ENCODE measurements at regions of chr3 and their contacts with region 1.

Region 1: DNA sequence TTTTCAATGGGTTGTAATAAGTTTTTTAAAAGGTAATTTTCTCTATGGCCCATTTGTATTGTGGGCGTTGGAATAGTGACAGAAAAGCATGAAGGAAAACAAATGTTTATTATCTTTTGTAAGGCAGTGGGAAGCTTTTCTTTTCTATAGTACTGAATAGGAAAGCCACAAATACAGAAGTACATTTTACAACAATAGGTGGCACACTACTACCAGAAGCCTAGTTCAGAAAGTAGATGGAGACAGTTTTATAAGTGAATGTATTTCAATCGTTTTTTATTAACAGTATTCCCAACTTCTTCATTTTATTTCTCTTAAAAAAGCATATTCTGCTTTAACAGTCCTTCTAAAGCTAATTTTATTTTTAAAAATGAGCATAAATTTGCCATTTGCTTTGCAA is 296.7 kb downstream of the PTPRG start:
- DNase-seq: no peak
- H3K4me3 Mint-ChIP-seq: no peak overlapping the region
- H3K27ac Mint-ChIP-seq: no peak overlapping the region
- H3K4me1 Mint-ChIP-seq: no peaks in the 10 kb centered on the region
- H3K27me3 Mint-ChIP-seq: peaks cover 3% of the 10 kb centered on the region

Region 2: DNA sequence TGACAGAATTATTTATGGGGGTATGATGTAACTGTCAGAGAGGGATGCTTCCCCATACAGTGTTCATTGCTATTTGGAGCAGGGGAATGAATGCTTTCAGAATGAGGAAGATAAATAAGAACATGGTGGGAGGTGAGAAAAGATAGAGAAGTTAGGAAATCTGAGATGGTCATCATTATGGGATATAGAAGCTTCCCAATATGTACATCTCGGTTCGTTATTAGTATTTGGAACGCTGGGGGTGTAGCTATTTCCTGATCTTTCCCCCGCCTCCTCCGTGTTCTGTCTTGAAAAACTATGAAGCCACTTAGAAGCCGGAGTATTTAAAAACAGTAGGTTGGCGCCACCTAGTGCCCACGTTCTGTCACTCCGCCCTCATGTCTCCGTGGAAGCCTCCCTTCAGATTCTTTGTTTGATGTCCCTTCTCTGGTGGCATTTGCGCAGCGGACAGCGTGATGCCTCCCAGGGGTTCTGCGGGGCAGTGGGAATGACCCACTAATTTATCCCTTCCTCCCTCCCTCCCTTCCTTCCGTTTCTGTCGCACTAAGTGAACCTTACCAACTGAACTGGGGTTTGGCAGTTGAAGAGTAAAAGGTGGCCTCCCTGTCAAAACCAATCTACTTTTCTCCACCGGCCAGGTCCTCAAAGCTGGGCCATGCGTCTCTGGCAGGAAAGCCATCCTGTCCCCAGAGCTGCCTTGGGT is 330.8 kb after region 1 on chr3:
- intact Hi-C with region 1: loop called (anchors 10 kb)
- DNase-seq: peak; percentile 35
- H3K4me3 Mint-ChIP-seq: peak overlapping the region; percentile 24
- H3K27ac Mint-ChIP-seq: no peak overlapping the region
- H3K4me1 Mint-ChIP-seq: peaks cover 2% of the 10 kb centered on the region
- H3K27me3 Mint-ChIP-seq: no peaks in the 10 kb centered on the region